Activated T-helper 2 cell treated with anti-CD3 and anti-CD28 coated beads, Interferon-gamma antibody, Interleukin-2, Interleukin-4, amounts not matched to agents 10 μg/mL and 5 μg/mL and 100 μg/mL, durations not matched to agents 14 hours and 24 hours and 36 hours (primary cell): ENCODE measurements at regions of chr12 and their contacts with region 1.

Region 1: GRCh38 chr12:89345830-89346740 is 6.2 kb downstream of the DUSP6 start:
- DNase-seq: peak; percentile 55
- H3K4me3 Mint-ChIP-seq: peak overlapping the region; percentile 97
- H3K27ac Mint-ChIP-seq: peak overlapping the region; percentile 92
- H3K4me1 Mint-ChIP-seq: peaks cover 70% of the 10 kb centered on the region
- H3K27me3 Mint-ChIP-seq: no peaks in the 10 kb centered on the region

Region 2: DNA sequence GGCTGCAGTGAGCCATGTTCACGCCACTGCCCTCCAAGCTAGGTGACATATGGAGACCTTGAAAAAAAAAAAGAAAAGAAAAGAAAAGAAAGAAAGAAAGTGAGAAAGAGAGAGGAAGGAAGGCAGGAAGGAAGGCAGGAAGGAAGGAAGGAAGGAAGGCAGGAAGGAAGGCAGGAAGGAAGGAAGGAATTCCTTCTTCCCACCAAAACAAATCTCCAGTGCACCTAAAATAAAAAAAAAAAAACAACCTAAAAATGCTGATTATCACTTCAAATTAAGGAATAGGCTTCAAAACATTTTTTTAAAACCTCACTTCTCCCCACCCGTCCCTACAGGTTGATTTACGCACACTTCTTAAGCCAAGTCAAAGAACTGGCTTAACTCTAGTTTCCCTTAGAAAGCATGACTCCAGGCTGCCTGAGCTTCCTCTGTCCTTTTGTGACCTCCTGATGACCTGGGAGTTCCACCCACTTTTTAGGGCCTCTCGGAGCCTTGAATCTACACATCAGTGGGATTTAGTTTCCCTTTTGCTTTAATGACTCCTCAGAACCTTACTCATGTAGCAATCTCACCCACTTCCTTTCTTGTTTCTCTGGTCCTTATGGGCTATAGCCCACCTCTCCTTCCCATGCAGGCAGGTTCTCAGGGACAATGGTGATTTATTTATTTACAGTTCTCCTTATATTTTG is 12.4 kb before region 1 on chr12:
- intact Hi-C with region 1: loop called (anchors 1 kb)
- DNase-seq: peak; percentile 47
- H3K4me3 Mint-ChIP-seq: peak overlapping the region; percentile 54
- H3K27ac Mint-ChIP-seq: peak overlapping the region; percentile 83
- H3K4me1 Mint-ChIP-seq: peaks cover 41% of the 10 kb centered on the region
- H3K27me3 Mint-ChIP-seq: no peaks in the 10 kb centered on the region